ENCODE measurements at regions of chr16 and their contacts with region 1.

Region 1: GRCh38 chr16:28823872-28824716 is 1.3 kb downstream of the ATXN2L start:
- DNase-seq: peak; percentile 91 to 98 (median 94)
- ATAC-seq: peak; percentile 64 to 65
- H3K4me3 Mint-ChIP-seq: peak overlapping the region; percentile 91 to 100 (median 98)
- H3K27ac Mint-ChIP-seq: peak overlapping the region; percentile 93 to 100 (median 98)
- H3K4me1 Mint-ChIP-seq: peaks cover 23 to 57% (median 49%) of the 10 kb centered on the region in 4 donors
- H3K27me3 Mint-ChIP-seq: peaks cover 0 to 4% (median 0%) of the 10 kb centered on the region in 5 donors

Region 2: GRCh38 chr16:28491970-28492474 is 332.1 kb before region 1 on chr16 and contains the start of gene CLN3:
- POLR2A ChIA-PET with region 1: interaction called, 25 read pairs
- DNase-seq: peak; percentile 61 to 98 (median 88)
- ATAC-seq: peak; percentile 69
- H3K4me3 Mint-ChIP-seq: peak within 1 kb of the TSS; percentile 95 to 99 (median 98)
- H3K27ac Mint-ChIP-seq: peak within 1 kb of the TSS; percentile 99 to 100 (median 100)
- H3K4me1 Mint-ChIP-seq: peaks cover 42 to 79% (median 68%) of the 10 kb centered on the region in 4 donors
- H3K27me3 Mint-ChIP-seq: no peaks in the 10 kb centered on the region
- polyA plus RNA-seq, gene CLN3: 16.2 to 27.2 (median 17.2) TPM

Region 3: GRCh38 chr16:28846080-28846932 is 22.2 kb after region 1 on chr16 and contains the start of gene TUFM:
- POLR2A ChIA-PET with region 1: interaction called, 99 read pairs
- DNase-seq: peak; percentile 93 to 99 (median 98)
- ATAC-seq: peak; percentile 92 to 94
- H3K4me3 Mint-ChIP-seq: peak within 1 kb of the TSS; percentile 88 to 97 (median 92)
- H3K27ac Mint-ChIP-seq: peak within 1 kb of the TSS; percentile 90 to 98 (median 96)
- H3K4me1 Mint-ChIP-seq: peaks cover 25 to 38% (median 31%) of the 10 kb centered on the region in 4 donors
- H3K27me3 Mint-ChIP-seq: no peaks in the 10 kb centered on the region
- polyA plus RNA-seq, gene TUFM: 141 to 155 (median 152) TPM

Region 4: GRCh38 chr16:28863929-28864793 is 40.1 kb after region 1 on chr16:
- POLR2A ChIA-PET with region 1: interaction called, 46 read pairs
- DNase-seq: peak in 5 of 10 donors; percentile 17 to 29 (median 21)
- ATAC-seq: no peak
- H3K4me3 Mint-ChIP-seq: peak overlapping the region; percentile 98 to 100 (median 98)
- H3K27ac Mint-ChIP-seq: peak overlapping the region; percentile 96 to 100 (median 99)
- H3K4me1 Mint-ChIP-seq: peaks cover 17 to 39% (median 34%) of the 10 kb centered on the region in 4 donors
- H3K27me3 Mint-ChIP-seq: no peaks in the 10 kb centered on the region

Region 5: DNA sequence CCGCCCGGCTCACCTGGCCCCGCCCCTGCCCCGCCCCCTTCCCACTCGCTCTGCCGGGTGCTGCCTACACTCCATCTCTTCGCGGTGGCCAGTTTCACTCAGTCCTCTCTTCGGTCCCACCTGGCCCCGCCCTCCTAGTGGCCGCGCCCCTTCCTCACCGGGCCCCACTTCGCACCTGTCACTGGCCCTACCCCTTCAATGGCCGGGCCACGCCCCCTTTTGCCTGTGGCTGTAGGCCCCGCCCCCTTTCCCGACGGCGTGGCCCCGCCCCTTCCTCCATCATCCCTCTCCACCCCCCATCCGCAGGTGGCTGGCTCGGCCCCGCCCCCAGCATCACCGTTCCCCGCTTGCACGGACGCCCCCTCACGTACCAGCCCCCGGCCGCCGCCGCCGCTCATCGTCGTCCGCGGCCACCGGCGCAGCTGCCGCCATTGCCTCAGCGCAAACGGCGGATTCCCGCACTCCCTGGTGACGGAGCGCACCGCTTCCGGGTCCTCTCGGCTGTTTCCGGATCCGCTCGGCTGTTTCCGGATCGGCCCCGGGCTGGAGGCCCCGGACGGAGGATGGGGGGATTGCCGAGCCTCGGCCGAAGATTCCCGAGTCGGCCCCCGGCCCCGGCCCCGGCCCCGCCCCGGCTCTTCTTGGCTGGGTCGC is 100.8 kb after region 1 on chr16 and contains the start of gene RABEP2:
- POLR2A ChIA-PET with region 1: interaction called, 15 read pairs
- DNase-seq: peak; percentile 90 to 100 (median 96)
- ATAC-seq: peak; percentile 85 to 88
- H3K4me3 Mint-ChIP-seq: peak within 1 kb of the TSS; percentile 85 to 98 (median 95)
- H3K27ac Mint-ChIP-seq: peak within 1 kb of the TSS; percentile 95 to 99 (median 98)
- H3K4me1 Mint-ChIP-seq: peaks cover 19 to 31% (median 25%) of the 10 kb centered on the region in 4 donors
- H3K27me3 Mint-ChIP-seq: no peaks in the 10 kb centered on the region
- polyA plus RNA-seq, gene RABEP2: 2.8 to 6.5 (median 3.0) TPM

Region 6: GRCh38 chr16:28943281-28943680 is 119.2 kb after region 1 on chr16:
- POLR2A ChIA-PET with region 1: interaction called, 17 read pairs
- DNase-seq: no peak
- ATAC-seq: no peak
- H3K4me3 Mint-ChIP-seq: no peak overlapping the region
- H3K27ac Mint-ChIP-seq: no peak overlapping the region
- H3K4me1 Mint-ChIP-seq: peaks cover 9 to 14% (median 12%) of the 10 kb centered on the region in 4 donors
- H3K27me3 Mint-ChIP-seq: no peaks in the 10 kb centered on the region

Region 7: GRCh38 chr16:28950648-28951409 is 126.7 kb after region 1 on chr16 and contains the start of gene NFATC2IP:
- POLR2A ChIA-PET with region 1: interaction called, 17 read pairs
- DNase-seq: peak; percentile 97 to 100 (median 99)
- ATAC-seq: peak; percentile 95 to 96
- H3K4me3 Mint-ChIP-seq: peak within 1 kb of the TSS; percentile 87 to 100 (median 96)
- H3K27ac Mint-ChIP-seq: peak within 1 kb of the TSS; percentile 90 to 99 (median 94)
- H3K4me1 Mint-ChIP-seq: peaks cover 15 to 36% (median 31%) of the 10 kb centered on the region in 4 donors
- H3K27me3 Mint-ChIP-seq: no peaks in the 10 kb centered on the region
- polyA plus RNA-seq, gene NFATC2IP: 22.8 to 30.2 (median 28.7) TPM